ENCODE measurements at regions of chr20 and their contacts with region 1.

Region 1: GRCh38 chr20:63864847-63865640 is at the start of gene TPD52L2:
- DNase-seq: peak; percentile 95 to 99 (median 97)
- ATAC-seq: peak; percentile 89
- H3K4me3 ChIP-seq: peak within 1 kb of the TSS; percentile 62 to 95
- H3K4me3 Mint-ChIP-seq: peak within 1 kb of the TSS; percentile 98
- H3K27ac ChIP-seq: peak within 1 kb of the TSS; percentile 59 to 86
- H3K27ac Mint-ChIP-seq: peak within 1 kb of the TSS; percentile 97
- H3K4me1 ChIP-seq: peaks cover 23% of the 10 kb centered on the region
- H3K4me1 Mint-ChIP-seq: peaks cover 34% of the 10 kb centered on the region
- H3K27me3 ChIP-seq: no peaks in the 10 kb centered on the region
- H3K27me3 Mint-ChIP-seq: no peaks in the 10 kb centered on the region
- CTCF ChIP-seq: no peak
- total RNA-seq, gene TPD52L2: 18.7 to 19.4 TPM

Region 2: GRCh38 chr20:63739130-63740069 is 125.6 kb before region 1 on chr20 and contains the start of gene SLC2A4RG:
- CTCF ChIA-PET with region 1: interaction called, 5 read pairs
- POLR2A ChIA-PET with region 1: interaction called, 11 read pairs
- intact Hi-C with region 1: no loop called
- DNase-seq: peak; percentile 37 to 88 (median 66)
- ATAC-seq: peak; percentile 17
- H3K4me3 ChIP-seq: peak within 1 kb of the TSS; percentile 80 to 94
- H3K4me3 Mint-ChIP-seq: peak within 1 kb of the TSS; percentile 92
- H3K27ac ChIP-seq: peak within 1 kb of the TSS; percentile 40 to 48
- H3K27ac Mint-ChIP-seq: no peak within 1 kb of the TSS
- H3K4me1 ChIP-seq: peaks cover 41% of the 10 kb centered on the region
- H3K4me1 Mint-ChIP-seq: peaks cover 16% of the 10 kb centered on the region
- H3K27me3 ChIP-seq: no peaks in the 10 kb centered on the region
- H3K27me3 Mint-ChIP-seq: no peaks in the 10 kb centered on the region
- CTCF ChIP-seq: no peak
- total RNA-seq, gene SLC2A4RG: 79.3 to 90.0 TPM

Region 3: DNA sequence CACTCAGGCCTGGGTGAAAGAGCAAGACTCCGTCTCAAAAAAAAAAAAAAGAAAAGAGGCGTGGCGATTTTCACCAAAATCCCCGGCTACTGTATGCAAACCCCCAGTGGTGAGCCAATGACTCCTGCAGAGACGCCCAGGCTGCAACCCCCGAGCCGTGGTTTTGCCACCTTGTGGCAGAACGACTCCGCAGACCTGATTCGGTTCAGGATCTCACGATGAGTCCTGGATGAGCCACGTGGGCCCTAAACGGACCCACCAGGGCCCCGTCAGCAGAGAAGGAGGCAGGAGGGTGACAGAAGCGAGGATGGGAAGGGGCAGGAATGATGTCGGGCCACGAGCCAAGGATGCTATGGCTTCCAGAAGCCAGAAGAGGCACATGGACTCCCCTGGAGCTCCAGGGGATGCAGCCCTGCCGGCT is 83.0 kb before region 1 on chr20:
- CTCF ChIA-PET with region 1: interaction called, 16 read pairs
- POLR2A ChIA-PET with region 1: no interaction called
- intact Hi-C with region 1: loop called (anchors 1 kb)
- DNase-seq: peak in 8 of 9 experiments; percentile 11 to 93 (median 76)
- ATAC-seq: peak; percentile 94
- H3K4me3 ChIP-seq: no peak overlapping the region
- H3K4me3 Mint-ChIP-seq: peak overlapping the region; percentile 39
- H3K27ac ChIP-seq: peak overlapping the region in 1 of 2 experiments; percentile 50
- H3K27ac Mint-ChIP-seq: peak overlapping the region; percentile 81
- H3K4me1 ChIP-seq: peaks cover 12% of the 10 kb centered on the region
- H3K4me1 Mint-ChIP-seq: peaks cover 18% of the 10 kb centered on the region
- H3K27me3 ChIP-seq: no peaks in the 10 kb centered on the region
- H3K27me3 Mint-ChIP-seq: no peaks in the 10 kb centered on the region
- CTCF ChIP-seq: peak; percentile 23

Region 4: GRCh38 chr20:63894358-63895201 is 29.5 kb after region 1 on chr20 and contains the start of gene DNAJC5:
- CTCF ChIA-PET with region 1: no interaction called
- POLR2A ChIA-PET with region 1: interaction called, 4 read pairs
- intact Hi-C with region 1: loop called (anchors 1 kb)
- DNase-seq: peak; percentile 93 to 99 (median 97)
- ATAC-seq: peak; percentile 92
- H3K4me3 ChIP-seq: peak within 1 kb of the TSS; percentile 46 to 66
- H3K4me3 Mint-ChIP-seq: peak within 1 kb of the TSS; percentile 95
- H3K27ac ChIP-seq: peak within 1 kb of the TSS; percentile 55 to 65
- H3K27ac Mint-ChIP-seq: peak within 1 kb of the TSS; percentile 96
- H3K4me1 ChIP-seq: peaks cover 41% of the 10 kb centered on the region
- H3K4me1 Mint-ChIP-seq: peaks cover 44% of the 10 kb centered on the region
- H3K27me3 ChIP-seq: no peaks in the 10 kb centered on the region
- H3K27me3 Mint-ChIP-seq: no peaks in the 10 kb centered on the region
- CTCF ChIP-seq: no peak
- total RNA-seq, gene DNAJC5: 24.3 TPM

Region 5: GRCh38 chr20:63973636-63974402 is 108.8 kb after region 1 on chr20:
- CTCF ChIA-PET with region 1: interaction called, 19 read pairs
- POLR2A ChIA-PET with region 1: no interaction called
- intact Hi-C with region 1: loop called in 1 of 2 experiments (anchors 1 kb)
- DNase-seq: peak; percentile 57 to 87 (median 77)
- ATAC-seq: peak; percentile 51
- H3K4me3 ChIP-seq: no peak overlapping the region
- H3K4me3 Mint-ChIP-seq: no peak overlapping the region
- H3K27ac ChIP-seq: no peak overlapping the region
- H3K27ac Mint-ChIP-seq: peak overlapping the region; percentile 53
- H3K4me1 ChIP-seq: peaks cover 35% of the 10 kb centered on the region
- H3K4me1 Mint-ChIP-seq: peaks cover 42% of the 10 kb centered on the region
- H3K27me3 ChIP-seq: no peaks in the 10 kb centered on the region
- H3K27me3 Mint-ChIP-seq: no peaks in the 10 kb centered on the region
- CTCF ChIP-seq: peak; percentile 99

Measured in CD8-positive, alpha-beta T cell (primary cell).